Activated CD8-positive, alpha-beta T cell treated with anti-CD3 and anti-CD28 coated beads for 36 hours (primary cell): ENCODE measurements at regions of chr1 and their contacts with region 1.

Region 1: GRCh38 chr1:207404849-207405525 is 49.1 kb upstream of the CR2 start:
- DNase-seq: no peak
- ATAC-seq: peak; percentile 86
- H3K4me3 Mint-ChIP-seq: no peak overlapping the region
- H3K27ac Mint-ChIP-seq: no peak overlapping the region
- H3K4me1 Mint-ChIP-seq: peaks cover 20% of the 10 kb centered on the region
- H3K27me3 Mint-ChIP-seq: peaks cover 5% of the 10 kb centered on the region
- CTCF ChIP-seq: peak; percentile 87

Region 2: DNA sequence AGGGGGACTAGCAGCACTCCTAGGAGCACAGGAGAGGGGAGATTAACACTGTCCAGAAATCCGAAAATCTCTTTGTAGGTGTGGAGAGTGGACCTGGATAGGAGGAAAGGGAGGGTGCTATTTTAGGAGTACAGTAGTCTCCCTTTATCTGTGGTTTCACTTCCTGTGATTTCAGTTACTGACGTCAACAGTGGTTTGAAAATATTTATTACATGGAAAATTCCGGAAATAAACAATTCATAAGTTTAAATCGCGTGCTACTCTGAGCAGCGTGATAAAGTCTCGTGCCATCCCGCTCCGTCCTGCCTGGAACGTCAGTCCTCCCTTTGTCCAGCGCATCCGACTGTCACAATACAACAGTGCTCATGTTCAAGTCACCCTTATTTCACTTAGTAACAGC is 514.3 kb before region 1 on chr1:
- CTCF ChIA-PET with region 1: no interaction called
- POLR2A ChIA-PET with region 1: no interaction called
- intact Hi-C with region 1: no loop called
- DNase-seq: no peak
- ATAC-seq: no peak
- H3K4me3 Mint-ChIP-seq: no peak overlapping the region
- H3K27ac Mint-ChIP-seq: peak overlapping the region; percentile 4
- H3K4me1 Mint-ChIP-seq: peaks cover 52% of the 10 kb centered on the region
- H3K27me3 Mint-ChIP-seq: no peaks in the 10 kb centered on the region
- CTCF ChIP-seq: no peak

Region 3: DNA sequence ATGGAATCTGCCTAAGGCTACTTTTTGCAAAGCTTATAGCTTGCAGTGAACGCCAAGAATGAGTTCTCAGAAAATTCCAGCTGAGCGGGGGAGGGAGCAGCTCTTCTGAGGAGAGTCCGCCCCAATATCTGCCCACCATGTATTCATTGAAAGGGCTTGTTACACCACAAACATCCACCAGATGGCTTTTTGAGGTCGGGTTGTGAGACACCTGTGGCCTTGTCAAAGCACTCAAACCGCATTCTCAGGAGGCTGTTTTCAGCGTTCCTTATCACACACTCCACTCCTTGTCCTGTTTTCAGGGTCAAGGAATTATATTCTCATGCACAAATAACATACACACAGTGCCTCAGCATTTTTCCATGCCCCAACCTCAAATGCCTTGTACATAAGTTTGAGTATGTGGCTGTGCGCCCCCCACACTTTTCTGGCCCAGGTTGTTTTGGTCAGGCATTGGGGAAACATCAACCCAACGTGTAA is 320.2 kb before region 1 on chr1:
- CTCF ChIA-PET with region 1: interaction called, 38 read pairs
- POLR2A ChIA-PET with region 1: no interaction called
- intact Hi-C with region 1: loop called (anchors 2 kb)
- DNase-seq: peak; percentile 73
- ATAC-seq: peak; percentile 83
- H3K4me3 Mint-ChIP-seq: no peak overlapping the region
- H3K27ac Mint-ChIP-seq: no peak overlapping the region
- H3K4me1 Mint-ChIP-seq: peaks cover 25% of the 10 kb centered on the region
- H3K27me3 Mint-ChIP-seq: peaks cover 2% of the 10 kb centered on the region
- CTCF ChIP-seq: peak; percentile 70

Region 4: GRCh38 chr1:207321079-207321789 is 83.8 kb before region 1 on chr1 and contains the start of gene CD55:
- CTCF ChIA-PET with region 1: interaction called, 14 read pairs
- POLR2A ChIA-PET with region 1: interaction called, 11 read pairs
- intact Hi-C with region 1: loop called (anchors 5 kb)
- DNase-seq: peak; percentile 100
- ATAC-seq: peak; percentile 92
- H3K4me3 Mint-ChIP-seq: peak within 1 kb of the TSS; percentile 84
- H3K27ac Mint-ChIP-seq: peak within 1 kb of the TSS; percentile 97
- H3K4me1 Mint-ChIP-seq: peaks cover 32% of the 10 kb centered on the region
- H3K27me3 Mint-ChIP-seq: no peaks in the 10 kb centered on the region
- CTCF ChIP-seq: peak; percentile 17
- total RNA-seq, gene CD55: 100 to 102 TPM

Region 5: DNA sequence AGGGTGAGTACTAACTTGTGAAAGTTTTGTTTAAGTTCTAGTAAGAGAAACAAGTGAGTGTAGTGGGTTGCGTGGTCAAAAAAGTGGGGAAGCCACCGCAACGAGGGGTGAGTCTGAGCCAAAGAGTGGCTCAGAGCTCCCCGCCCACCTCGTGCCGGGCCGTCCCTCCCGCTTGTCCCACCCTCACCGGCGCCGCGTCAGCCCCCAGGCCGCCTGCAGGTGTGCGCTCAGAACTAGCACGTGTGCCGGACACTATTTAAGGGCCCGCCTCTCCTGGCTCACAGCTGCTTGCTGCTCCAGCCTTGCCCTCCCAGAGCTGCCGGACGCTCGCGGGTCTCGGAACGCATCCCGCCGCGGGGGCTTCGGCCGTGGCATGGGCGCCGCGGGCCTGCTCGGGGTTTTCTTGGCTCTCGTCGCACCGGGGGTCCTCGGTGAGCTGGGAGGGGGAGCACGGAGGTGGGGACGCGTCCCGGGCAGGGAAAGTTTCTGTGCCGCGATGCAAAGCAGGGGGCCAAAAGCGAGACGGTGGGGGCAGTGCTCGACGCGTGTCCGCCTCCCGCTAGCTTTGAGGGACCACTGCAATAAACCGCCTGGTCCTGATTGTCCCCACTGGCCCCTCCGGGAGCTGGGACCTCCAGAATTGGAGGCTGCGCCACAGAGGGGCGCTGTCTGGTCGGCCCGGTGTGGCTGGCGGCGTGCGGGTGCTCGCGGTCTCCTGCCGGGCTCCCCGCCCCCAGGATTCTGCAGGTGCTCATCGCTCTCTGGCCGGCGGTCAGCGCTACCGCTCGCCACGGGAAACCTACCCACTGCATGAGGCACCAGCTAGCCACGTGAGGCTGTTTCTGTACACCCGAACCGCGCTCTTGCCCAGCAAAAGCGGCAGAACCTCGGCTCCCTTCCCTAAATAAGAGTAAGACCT is 49.3 kb after region 1 on chr1 and contains the start of gene CR2:
- CTCF ChIA-PET with region 1: interaction called, 11 read pairs
- POLR2A ChIA-PET with region 1: no interaction called
- intact Hi-C with region 1: loop called (anchors 5 kb)
- DNase-seq: peak; percentile 80
- ATAC-seq: peak; percentile 85
- H3K4me3 Mint-ChIP-seq: peak within 1 kb of the TSS; percentile 68
- H3K27ac Mint-ChIP-seq: peak within 1 kb of the TSS; percentile 60
- H3K4me1 Mint-ChIP-seq: peaks cover 11% of the 10 kb centered on the region
- H3K27me3 Mint-ChIP-seq: peaks cover 17% of the 10 kb centered on the region
- CTCF ChIP-seq: peak; percentile 63
- total RNA-seq, gene CR2: 1.9 to 2.1 TPM

Region 6: DNA sequence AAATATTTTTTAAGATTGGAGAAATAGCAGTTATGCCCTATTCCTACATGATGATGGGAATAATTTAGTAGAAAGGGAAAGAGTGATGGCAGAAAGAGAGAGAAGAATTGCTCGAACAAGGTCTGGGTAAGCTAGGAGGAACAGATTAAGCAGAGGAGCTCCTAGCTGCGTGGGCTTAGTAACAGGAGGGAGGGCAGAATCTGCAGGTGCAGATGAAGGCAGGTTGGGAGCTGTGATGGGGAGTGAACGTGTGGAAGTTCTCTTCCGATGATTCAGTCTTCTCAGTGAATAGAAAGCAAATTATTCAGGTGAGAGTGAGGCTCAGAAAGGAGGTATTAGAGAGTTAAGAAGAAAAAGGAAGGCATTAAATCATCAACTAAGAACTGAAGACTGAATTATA is 82.6 kb after region 1 on chr1:
- CTCF ChIA-PET with region 1: no interaction called
- POLR2A ChIA-PET with region 1: no interaction called
- intact Hi-C with region 1: no loop called
- DNase-seq: no peak
- ATAC-seq: no peak
- H3K4me3 Mint-ChIP-seq: no peak overlapping the region
- H3K27ac Mint-ChIP-seq: no peak overlapping the region
- H3K4me1 Mint-ChIP-seq: no peaks in the 10 kb centered on the region
- H3K27me3 Mint-ChIP-seq: no peaks in the 10 kb centered on the region
- CTCF ChIP-seq: no peak